ENCODE measurements at regions of chr6 and their contacts with region 1.

Region 1: DNA sequence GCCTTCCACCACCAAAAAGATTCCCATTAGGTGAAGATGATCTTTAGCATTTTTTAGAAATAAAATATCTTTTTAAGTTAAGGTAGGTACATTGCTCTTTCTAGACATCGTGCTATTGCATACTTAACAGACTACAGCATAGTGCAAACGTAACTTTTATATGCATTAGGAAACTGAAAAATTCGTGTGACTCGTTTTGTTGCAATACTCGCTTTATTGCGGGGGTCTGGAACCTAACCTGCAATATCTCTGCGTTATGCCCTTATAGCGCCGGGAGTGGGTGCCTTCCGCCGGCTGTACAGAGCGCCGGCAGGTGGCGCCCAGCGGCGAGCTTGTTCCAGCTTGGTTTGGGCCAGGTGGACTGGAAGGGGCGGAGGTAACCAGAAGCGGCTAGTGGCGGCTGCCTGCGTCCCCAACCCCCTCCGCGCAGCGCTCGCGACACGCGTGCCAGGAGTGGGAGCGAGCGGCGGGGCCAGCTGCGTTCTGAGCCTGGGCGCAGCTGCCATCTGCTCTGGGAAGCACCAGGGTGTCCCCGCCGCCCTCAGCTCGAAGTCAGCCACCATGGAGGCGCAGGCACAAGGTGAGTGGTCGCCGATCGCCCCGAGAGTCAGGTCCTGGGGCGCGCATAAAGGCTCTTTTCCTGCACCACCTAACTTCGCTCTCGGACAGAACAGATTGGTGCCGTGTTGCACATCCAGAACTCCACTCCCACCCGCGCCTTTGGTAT is at the start of gene TPD52L1:
- DNase-seq: peak; percentile 81 to 88 (median 87)
- ATAC-seq: peak; percentile 92 to 95 (median 95)
- H3K4me3 ChIP-seq: peak within 1 kb of the TSS; percentile 53 to 90 (median 70)
- H3K27ac ChIP-seq: peak within 1 kb of the TSS; percentile 51 to 89 (median 69)
- H3K4me1 ChIP-seq: peaks cover 0 to 27% (median 13%) of the 10 kb centered on the region in 12 donors
- H3K27me3 ChIP-seq: peaks cover 0 to 15% (median 0%) of the 10 kb centered on the region in 9 donors
- CTCF ChIP-seq: peak; percentile 71 to 97 (median 87)
- POLR2A ChIP-seq: peak in 1 of 2 donors; percentile 16
- total RNA-seq, gene TPD52L1: 47.0 to 146 (median 74.2) TPM

Region 2: GRCh38 chr6:125191916-125192609 is 38.5 kb after region 1 on chr6:
- intact Hi-C with region 1: loop called in 3 of 10 experiments (anchors 2 to 5 kb)
- DNase-seq: peak in 4 of 5 donors; percentile 21 to 63 (median 43)
- ATAC-seq: peak; percentile 13 to 80 (median 68)
- H3K4me3 ChIP-seq: no peak overlapping the region
- H3K27ac ChIP-seq: no peak overlapping the region
- H3K4me1 ChIP-seq: peaks cover 2 to 63% (median 37%) of the 10 kb centered on the region in 12 donors
- H3K27me3 ChIP-seq: no peaks in the 10 kb centered on the region
- CTCF ChIP-seq: peak; percentile 52 to 86 (median 67)
- POLR2A ChIP-seq: no peak

Region 3: DNA sequence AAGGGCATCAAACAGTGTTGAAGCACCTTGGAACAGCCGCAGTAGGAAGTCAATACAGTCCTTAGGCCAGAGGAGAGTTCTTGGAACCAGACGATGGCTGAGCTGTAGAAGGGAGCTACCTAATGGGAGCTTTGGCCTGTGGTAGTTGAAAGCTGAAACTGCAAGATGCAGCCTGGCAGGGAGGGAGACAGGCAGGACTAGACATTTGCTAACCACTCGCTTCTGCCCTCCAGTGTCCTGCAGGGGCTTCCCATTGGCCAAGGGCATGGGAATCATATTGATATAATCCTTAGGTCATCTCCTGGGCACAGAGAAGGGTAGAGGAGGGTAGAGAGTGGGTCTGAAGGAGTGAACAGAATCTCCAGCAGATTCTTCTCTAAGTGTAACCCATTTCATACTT is 60.4 kb after region 1 on chr6:
- intact Hi-C with region 1: loop called in 2 of 10 experiments (anchors 5 to 10 kb)
- DNase-seq: no peak
- ATAC-seq: peak in 1 of 4 donors; percentile 19
- H3K4me3 ChIP-seq: no peak overlapping the region
- H3K27ac ChIP-seq: no peak overlapping the region
- H3K4me1 ChIP-seq: peaks cover 0 to 24% (median under 1%) of the 10 kb centered on the region in 12 donors
- H3K27me3 ChIP-seq: no peaks in the 10 kb centered on the region
- CTCF ChIP-seq: no peak
- POLR2A ChIP-seq: no peak

Region 4: DNA sequence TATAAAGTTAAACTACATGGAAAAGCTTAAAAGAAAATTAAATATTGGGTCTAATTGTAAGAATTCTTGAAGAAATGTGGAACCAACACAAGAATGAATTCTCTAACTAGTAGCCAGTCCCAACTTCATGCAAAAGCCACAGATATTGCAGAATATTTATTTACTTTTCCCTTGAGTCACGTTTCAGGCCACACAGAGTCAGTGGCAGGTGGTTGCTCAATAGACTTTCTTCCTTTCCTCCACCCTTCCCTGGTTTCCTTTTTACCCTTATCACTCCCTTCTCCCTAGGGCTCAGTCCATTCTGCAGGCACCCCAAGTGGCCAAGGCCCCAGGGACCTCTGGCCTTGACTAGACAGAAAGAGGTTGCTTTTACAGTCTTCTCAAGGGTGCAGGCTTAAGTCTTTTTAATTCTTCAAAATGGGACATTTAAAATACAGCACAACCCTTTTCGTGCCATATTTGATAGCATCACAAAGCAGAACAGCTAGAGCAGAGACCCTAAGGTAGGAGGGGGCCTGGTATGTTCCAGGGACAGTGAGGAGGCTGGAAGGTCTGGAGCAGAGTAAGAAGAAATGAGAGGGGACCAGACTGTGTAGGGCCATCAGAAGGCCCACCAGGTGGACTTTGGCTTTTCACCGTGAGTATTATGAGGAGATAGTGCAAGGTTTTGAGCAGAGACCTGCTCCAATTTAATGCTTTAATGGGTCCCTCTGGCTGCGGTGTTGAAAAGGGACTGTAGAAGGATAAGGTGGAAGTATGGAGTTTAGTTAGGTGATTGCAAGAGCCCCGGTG is 83.2 kb after region 1 on chr6:
- intact Hi-C with region 1: loop called in 1 of 10 experiments (anchors 10 kb)
- DNase-seq: no peak
- ATAC-seq: no peak
- H3K4me3 ChIP-seq: no peak overlapping the region
- H3K27ac ChIP-seq: no peak overlapping the region
- H3K4me1 ChIP-seq: peaks cover 0 to 19% (median 0%) of the 10 kb centered on the region in 12 donors
- H3K27me3 ChIP-seq: no peaks in the 10 kb centered on the region
- CTCF ChIP-seq: no peak
- POLR2A ChIP-seq: no peak

Region 5: DNA sequence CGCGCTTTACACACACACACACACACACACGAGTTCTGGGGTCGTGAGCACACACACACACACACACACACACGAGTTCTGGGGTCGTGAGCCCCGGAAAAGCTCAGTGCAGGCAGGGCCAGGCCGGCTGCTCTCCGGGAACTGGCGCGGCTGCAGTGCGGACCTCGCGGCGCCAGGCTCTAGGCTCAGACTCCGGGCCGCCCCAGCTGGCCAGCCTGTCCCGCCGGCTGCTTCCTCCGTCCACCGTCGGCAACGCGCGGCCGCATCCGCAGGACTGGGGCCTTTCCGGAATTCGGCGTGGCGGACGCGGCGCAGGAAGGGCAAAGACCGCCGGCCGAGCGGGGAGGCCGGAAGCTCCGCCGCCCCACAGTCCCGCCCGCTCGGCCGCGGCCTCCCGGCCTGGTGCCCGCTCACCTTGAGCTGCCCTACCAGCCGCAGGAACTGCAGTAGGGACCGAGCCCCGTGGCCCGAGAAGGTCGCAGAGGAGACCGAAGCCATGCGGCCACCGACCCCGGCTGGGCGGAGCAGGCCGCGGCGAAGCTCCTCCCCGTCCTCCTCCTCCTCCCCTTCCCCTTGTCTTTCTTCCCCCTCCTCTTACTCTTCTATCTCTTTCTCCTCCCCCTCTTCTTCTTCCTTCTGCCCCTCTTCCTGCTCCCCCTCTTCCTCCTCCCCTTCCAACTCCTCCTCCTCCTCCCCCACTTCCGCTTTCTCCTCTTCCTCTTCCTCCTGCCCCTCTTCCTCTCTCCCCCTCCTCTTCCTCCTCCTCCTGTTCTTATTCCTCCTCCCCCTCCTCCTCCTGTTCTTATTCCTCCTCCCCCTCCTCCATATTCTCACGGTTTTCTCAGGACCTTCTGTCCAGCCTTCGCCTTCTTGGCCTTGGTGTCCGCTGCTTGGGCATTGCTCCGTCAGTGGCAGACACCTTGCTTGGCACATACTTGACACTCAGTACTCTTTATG is 148.2 kb after region 1 on chr6 and contains the start of gene HDDC2:
- intact Hi-C with region 1: loop called (anchors 1 to 5 kb)
- DNase-seq: peak; percentile 84 to 91 (median 87)
- ATAC-seq: peak; percentile 65 to 93 (median 92)
- H3K4me3 ChIP-seq: peak within 1 kb of the TSS; percentile 46 to 84 (median 74)
- H3K27ac ChIP-seq: peak within 1 kb of the TSS; percentile 83 to 97 (median 92)
- H3K4me1 ChIP-seq: peaks cover 0 to 31% (median 21%) of the 10 kb centered on the region in 12 donors
- H3K27me3 ChIP-seq: no peaks in the 10 kb centered on the region
- CTCF ChIP-seq: no peak
- POLR2A ChIP-seq: peak in 1 of 2 donors; percentile 65
- total RNA-seq, gene HDDC2: 70.2 to 123 (median 92.6) TPM

Region 6: DNA sequence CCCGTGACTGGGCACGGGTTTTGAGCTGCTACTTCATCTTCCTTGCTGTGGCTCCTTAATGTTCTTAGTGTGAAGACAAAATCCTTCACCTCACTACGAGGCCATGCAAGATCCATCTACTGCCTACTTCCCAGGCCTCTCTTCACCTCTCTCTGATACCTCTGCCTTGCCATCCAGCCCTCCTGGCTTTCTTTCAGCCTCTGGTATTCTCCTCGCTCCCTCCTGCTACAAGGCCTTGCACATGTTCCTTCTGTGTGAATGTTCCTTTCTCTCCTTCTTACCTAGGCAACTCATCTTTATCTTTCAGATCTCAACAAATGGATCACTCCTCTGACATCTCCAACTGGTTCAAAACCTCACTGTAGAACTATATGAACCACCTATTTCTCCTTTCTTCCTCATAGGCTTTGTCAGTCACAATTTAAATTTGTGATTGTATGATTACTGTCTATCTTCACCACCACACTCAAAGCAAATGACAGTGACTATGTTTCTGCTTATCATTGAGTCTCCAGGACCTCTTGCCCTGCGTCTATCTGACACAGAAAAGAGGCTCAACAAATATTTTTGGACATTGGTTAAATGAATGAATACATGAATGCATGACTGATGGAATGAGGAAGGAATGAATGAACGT is 615.7 kb after region 1 on chr6:
- intact Hi-C with region 1: loop called in 5 of 10 experiments (anchors 2 to 10 kb)
- DNase-seq: no peak
- ATAC-seq: no peak
- H3K4me3 ChIP-seq: no peak overlapping the region
- H3K27ac ChIP-seq: no peak overlapping the region
- H3K4me1 ChIP-seq: peaks cover 0 to 18% (median 0%) of the 10 kb centered on the region in 12 donors
- H3K27me3 ChIP-seq: peaks cover 0 to 7% (median 0%) of the 10 kb centered on the region in 9 donors
- CTCF ChIP-seq: no peak
- POLR2A ChIP-seq: no peak

Measured in heart left ventricle (tissue), 16 donors.